ENCODE measurements at regions of chr2 and their contacts with region 1.

Region 1: GRCh38 chr2:209681201-209681735 is 90.4 kb upstream of the UNC80 start:
- DNase-seq: no peak
- ATAC-seq: no peak
- H3K4me3 ChIP-seq: no peak overlapping the region
- H3K4me3 Mint-ChIP-seq: no peak overlapping the region
- H3K27ac ChIP-seq: no peak overlapping the region
- H3K27ac Mint-ChIP-seq: no peak overlapping the region
- H3K4me1 ChIP-seq: no peaks in the 10 kb centered on the region
- H3K4me1 Mint-ChIP-seq: no peaks in the 10 kb centered on the region
- H3K27me3 ChIP-seq: no peaks in the 10 kb centered on the region
- H3K27me3 Mint-ChIP-seq: no peaks in the 10 kb centered on the region

Region 2: GRCh38 chr2:209702775-209703174 is 21.5 kb after region 1 on chr2:
- CTCF ChIA-PET with region 1: no interaction called
- POLR2A ChIA-PET with region 1: no interaction called
- intact Hi-C with region 1: loop called in 1 of 2 experiments (anchors 1 kb)
- DNase-seq: no peak
- ATAC-seq: no peak
- H3K4me3 ChIP-seq: no peak overlapping the region
- H3K4me3 Mint-ChIP-seq: no peak overlapping the region
- H3K27ac ChIP-seq: no peak overlapping the region
- H3K27ac Mint-ChIP-seq: no peak overlapping the region
- H3K4me1 ChIP-seq: no peaks in the 10 kb centered on the region
- H3K4me1 Mint-ChIP-seq: no peaks in the 10 kb centered on the region
- H3K27me3 ChIP-seq: no peaks in the 10 kb centered on the region
- H3K27me3 Mint-ChIP-seq: no peaks in the 10 kb centered on the region

Measured in naive thymus-derived CD4-positive, alpha-beta T cell (primary cell).